Activated B cell treated with CpG ODN at 0.5 μM for 24 hours (primary cell): ENCODE measurements at regions of chr19 and their contacts with region 1.

Region 1: DNA sequence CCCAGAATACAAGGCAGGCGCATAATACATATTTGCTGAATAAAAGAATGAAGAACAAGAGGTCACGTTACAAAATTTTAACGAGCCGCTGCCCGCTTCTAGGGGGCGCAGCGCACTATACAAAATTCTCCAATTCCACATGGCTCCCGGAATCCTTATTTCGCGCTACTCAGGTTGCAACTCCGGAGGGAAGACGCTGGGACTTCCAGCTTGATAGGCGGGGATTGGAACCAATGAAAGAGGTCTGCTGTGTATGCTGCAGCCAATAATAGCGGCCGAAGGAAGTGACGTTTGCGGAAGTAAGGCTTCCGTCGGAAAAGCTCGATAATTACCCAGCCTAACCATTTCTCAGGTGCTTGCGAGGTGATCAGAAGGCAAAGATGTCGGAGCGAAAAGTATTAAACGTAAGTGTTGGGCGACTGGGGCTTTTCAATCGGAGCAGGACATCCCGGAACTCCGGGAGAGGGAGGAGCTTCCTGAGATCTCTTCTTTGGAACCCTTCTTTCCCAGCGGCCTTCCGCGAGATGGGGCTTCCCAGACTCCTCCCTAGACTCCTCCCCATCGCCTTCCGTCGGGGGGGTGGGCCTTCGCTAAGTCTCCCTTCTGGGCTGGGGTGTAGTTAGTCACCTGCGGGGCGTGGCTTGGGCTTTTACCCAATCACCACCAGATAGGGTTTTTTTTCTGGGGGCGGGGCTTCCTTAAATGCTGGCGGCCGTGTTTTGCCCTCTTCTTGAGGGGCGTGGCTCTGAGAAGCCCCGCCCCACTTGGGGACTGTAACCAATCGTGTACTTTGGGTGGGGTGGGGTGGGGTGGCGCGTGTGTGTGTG is at the start of gene YJU2:
- DNase-seq: peak; percentile 89
- ATAC-seq: peak; percentile 96
- H3K4me3 Mint-ChIP-seq: peak within 1 kb of the TSS; percentile 90
- H3K27ac Mint-ChIP-seq: peak within 1 kb of the TSS; percentile 96
- H3K4me1 Mint-ChIP-seq: peaks cover 35% of the 10 kb centered on the region
- H3K27me3 Mint-ChIP-seq: no peaks in the 10 kb centered on the region
- CTCF ChIP-seq: no peak
- total RNA-seq, gene YJU2: 40.7 and 43.0 TPM in 2 replicates

Region 2: DNA sequence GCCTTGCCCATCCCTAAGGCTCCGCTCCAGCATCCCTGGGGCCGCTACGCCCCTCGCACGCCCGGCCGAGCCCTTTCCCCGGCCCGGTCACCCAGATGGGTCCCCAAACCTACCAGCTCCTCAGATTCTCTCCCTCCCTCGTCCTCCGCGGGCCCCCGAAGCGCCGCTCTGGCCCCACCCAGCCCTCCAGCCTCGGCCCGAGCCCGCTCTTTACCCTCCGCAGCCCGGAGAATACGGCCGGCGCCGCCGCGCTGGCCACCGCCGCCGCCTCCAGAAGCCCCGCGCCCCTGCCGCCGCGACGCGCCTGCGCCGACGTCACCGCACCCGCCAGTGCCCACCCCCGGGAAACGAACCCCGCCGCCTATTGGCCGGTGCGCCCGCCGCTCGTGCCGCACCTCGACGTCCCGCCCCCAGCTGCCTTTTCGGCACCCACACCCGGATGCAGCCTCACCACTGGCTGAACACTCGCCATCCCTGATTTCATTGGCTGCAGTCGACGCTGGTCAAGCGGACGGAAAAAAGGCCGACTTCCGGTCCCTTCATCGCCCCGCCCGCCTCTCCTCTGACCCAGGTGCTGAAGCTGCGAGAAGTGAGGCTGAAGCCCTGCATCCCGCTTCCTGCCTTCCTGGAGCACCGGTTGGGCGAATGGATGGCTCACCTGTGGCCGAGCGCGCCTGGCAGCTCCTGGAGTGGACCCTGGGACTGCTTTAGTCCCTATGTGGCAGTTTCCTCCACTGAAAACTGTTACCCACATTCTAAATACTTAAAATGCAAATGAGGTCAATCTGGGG is 276.0 kb before region 1 on chr19 and contains the start of gene DAPK3:
- CTCF ChIA-PET with region 1: no interaction called
- POLR2A ChIA-PET with region 1: interaction called, 11 read pairs
- intact Hi-C with region 1: no loop called
- DNase-seq: peak; percentile 94
- ATAC-seq: peak; percentile 97
- H3K4me3 Mint-ChIP-seq: peak within 1 kb of the TSS; percentile 88
- H3K27ac Mint-ChIP-seq: peak within 1 kb of the TSS; percentile 84
- H3K4me1 Mint-ChIP-seq: peaks cover 27% of the 10 kb centered on the region
- H3K27me3 Mint-ChIP-seq: no peaks in the 10 kb centered on the region
- CTCF ChIP-seq: no peak
- total RNA-seq, gene DAPK3: 37.5 and 42.2 TPM in 2 replicates

Region 3: GRCh38 chr19:4232958-4233853 is 13.8 kb before region 1 on chr19:
- CTCF ChIA-PET with region 1: interaction called, 8 read pairs
- POLR2A ChIA-PET with region 1: interaction called, 60 read pairs
- intact Hi-C with region 1: loop called (anchors 1 kb)
- DNase-seq: peak; percentile 71
- ATAC-seq: no peak
- H3K4me3 Mint-ChIP-seq: peak overlapping the region; percentile 60
- H3K27ac Mint-ChIP-seq: peak overlapping the region; percentile 62
- H3K4me1 Mint-ChIP-seq: peaks cover 16% of the 10 kb centered on the region
- H3K27me3 Mint-ChIP-seq: no peaks in the 10 kb centered on the region
- CTCF ChIP-seq: no peak

Region 4: GRCh38 chr19:4295972-4296771 is 49.2 kb after region 1 on chr19:
- CTCF ChIA-PET with region 1: no interaction called
- POLR2A ChIA-PET with region 1: no interaction called
- intact Hi-C with region 1: no loop called
- DNase-seq: no peak
- ATAC-seq: peak; percentile 37
- H3K4me3 Mint-ChIP-seq: no peak overlapping the region
- H3K27ac Mint-ChIP-seq: no peak overlapping the region
- H3K4me1 Mint-ChIP-seq: no peaks in the 10 kb centered on the region
- H3K27me3 Mint-ChIP-seq: peaks cover 5% of the 10 kb centered on the region
- CTCF ChIP-seq: no peak

Region 5: DNA sequence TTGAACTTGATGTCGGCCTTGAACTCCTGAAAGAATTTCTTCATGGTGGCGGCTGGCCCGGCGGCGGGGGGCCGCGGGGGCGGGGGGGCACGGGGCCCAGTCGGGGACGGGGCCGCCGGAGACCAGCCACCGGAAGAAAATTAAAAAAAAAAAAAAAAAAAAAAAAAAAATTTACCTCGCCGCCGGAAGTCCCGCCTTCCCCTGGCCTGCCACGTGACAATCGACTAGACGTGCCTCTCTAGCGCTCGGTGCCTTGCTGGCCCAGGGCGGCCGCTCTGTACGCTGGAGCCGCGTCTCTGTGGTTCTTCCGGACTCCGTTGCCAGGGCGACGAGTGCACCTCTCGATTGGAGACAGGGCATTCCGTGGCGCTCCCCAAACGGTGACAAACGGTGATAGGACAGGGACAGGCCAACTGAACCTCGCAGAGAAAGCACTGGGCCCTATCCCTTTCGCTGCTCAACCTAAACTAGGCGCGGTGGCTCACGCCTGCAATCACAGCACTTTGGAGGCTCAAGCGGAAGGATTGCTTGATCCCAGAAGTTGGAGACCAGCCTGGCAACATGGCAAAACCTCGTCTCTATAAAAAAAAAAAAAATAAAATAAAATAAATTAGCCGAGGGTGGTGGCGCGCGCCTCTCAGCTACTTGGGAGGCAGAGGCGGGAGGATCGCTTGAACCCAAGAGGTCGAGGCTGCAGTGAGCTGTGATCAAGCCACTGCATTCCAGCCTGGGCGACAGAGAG is 210.8 kb after region 1 on chr19 and contains the start of gene UBXN6:
- CTCF ChIA-PET with region 1: no interaction called
- POLR2A ChIA-PET with region 1: interaction called, 4 read pairs
- intact Hi-C with region 1: loop called (anchors 1 kb)
- DNase-seq: peak; percentile 95
- ATAC-seq: peak; percentile 95
- H3K4me3 Mint-ChIP-seq: peak within 1 kb of the TSS; percentile 89
- H3K27ac Mint-ChIP-seq: peak within 1 kb of the TSS; percentile 86
- H3K4me1 Mint-ChIP-seq: peaks cover 20% of the 10 kb centered on the region
- H3K27me3 Mint-ChIP-seq: no peaks in the 10 kb centered on the region
- CTCF ChIP-seq: no peak
- total RNA-seq, gene UBXN6: 54.3 and 58.2 TPM in 2 replicates